CD8-positive, alpha-beta memory T cell (primary cell): ENCODE measurements at regions of chr15 and their contacts with region 1.

Region 1: GRCh38 chr15:101544613-101544945 is 55.1 kb upstream of the PCSK6 start:
- DNase-seq: no peak
- H3K4me3 ChIP-seq: no peak overlapping the region
- H3K4me3 Mint-ChIP-seq: no peak overlapping the region
- H3K27ac ChIP-seq: no peak overlapping the region
- H3K27ac Mint-ChIP-seq: no peak overlapping the region
- H3K4me1 ChIP-seq: no peaks in the 10 kb centered on the region
- H3K4me1 Mint-ChIP-seq: no peaks in the 10 kb centered on the region
- H3K27me3 ChIP-seq: no peaks in the 10 kb centered on the region
- H3K27me3 Mint-ChIP-seq: peaks cover 15 to 48% of the 10 kb centered on the region in 2 donors

Region 2: GRCh38 chr15:101306341-101307047 is 238.1 kb before region 1 on chr15:
- CTCF ChIA-PET with region 1: no interaction called
- POLR2A ChIA-PET with region 1: interaction called, 13 read pairs
- DNase-seq: no peak
- H3K4me3 ChIP-seq: no peak overlapping the region
- H3K4me3 Mint-ChIP-seq: no peak overlapping the region
- H3K27ac ChIP-seq: no peak overlapping the region
- H3K27ac Mint-ChIP-seq: no peak overlapping the region
- H3K4me1 ChIP-seq: no peaks in the 10 kb centered on the region
- H3K4me1 Mint-ChIP-seq: no peaks in the 10 kb centered on the region
- H3K27me3 ChIP-seq: no peaks in the 10 kb centered on the region
- H3K27me3 Mint-ChIP-seq: peaks cover 0 to 7% of the 10 kb centered on the region in 2 donors